Activated naive CD4-positive, alpha-beta T cell treated with anti-CD3 and anti-CD28 coated beads for 36 hours (primary cell): ENCODE measurements at regions of chr11 and their contacts with region 1.

Region 1: GRCh38 chr11:95739108-95739938 is 50.3 kb downstream of the FAM76B start:
- DNase-seq: no peak
- H3K4me3 Mint-ChIP-seq: no peak overlapping the region
- H3K27ac Mint-ChIP-seq: no peak overlapping the region
- H3K4me1 Mint-ChIP-seq: peaks cover 4% of the 10 kb centered on the region
- H3K27me3 Mint-ChIP-seq: no peaks in the 10 kb centered on the region

Region 2: GRCh38 chr11:95727620-95728019 is 11.7 kb before region 1 on chr11:
- CTCF ChIA-PET with region 1: no interaction called
- intact Hi-C with region 1: no loop called
- DNase-seq: no peak
- H3K4me3 Mint-ChIP-seq: no peak overlapping the region
- H3K27ac Mint-ChIP-seq: no peak overlapping the region
- H3K4me1 Mint-ChIP-seq: no peaks in the 10 kb centered on the region
- H3K27me3 Mint-ChIP-seq: no peaks in the 10 kb centered on the region

Region 3: DNA sequence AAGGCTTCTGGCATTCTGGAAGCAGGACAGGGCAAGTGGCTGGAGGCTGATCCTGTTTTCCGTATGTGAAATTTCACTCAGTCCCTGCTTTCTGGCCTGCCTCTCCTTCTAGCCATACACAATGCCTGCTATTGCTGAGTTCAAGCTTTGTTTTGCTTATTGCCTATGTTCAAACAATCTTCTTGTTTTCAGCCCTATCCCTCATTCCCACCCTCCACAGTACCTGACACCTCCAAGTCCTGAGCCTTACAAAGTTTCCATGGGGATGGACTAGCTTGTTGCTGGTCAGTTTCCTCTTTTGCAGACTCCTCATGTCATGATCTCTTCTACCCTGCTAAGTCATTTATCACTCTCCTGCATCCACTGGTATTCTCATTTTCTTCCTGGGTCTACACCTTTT is 12.2 kb after region 1 on chr11:
- CTCF ChIA-PET with region 1: no interaction called
- intact Hi-C with region 1: loop called (anchors 1 kb)
- DNase-seq: no peak
- H3K4me3 Mint-ChIP-seq: no peak overlapping the region
- H3K27ac Mint-ChIP-seq: no peak overlapping the region
- H3K4me1 Mint-ChIP-seq: no peaks in the 10 kb centered on the region
- H3K27me3 Mint-ChIP-seq: no peaks in the 10 kb centered on the region